GM23248 (cell line): ENCODE measurements at regions of chr4 and their contacts with region 1.

Region 1: GRCh38 chr4:15956179-15956850 is 6.7 kb downstream of the FGFBP2 start:
- DNase-seq: peak; percentile 70
- H3K4me3 ChIP-seq: no peak overlapping the region
- H3K27ac ChIP-seq: no peak overlapping the region
- H3K4me1 ChIP-seq: no peaks in the 10 kb centered on the region
- H3K27me3 ChIP-seq: peaks cover 7% of the 10 kb centered on the region; the same call in 1 of the 2 replicates

Region 2: DNA sequence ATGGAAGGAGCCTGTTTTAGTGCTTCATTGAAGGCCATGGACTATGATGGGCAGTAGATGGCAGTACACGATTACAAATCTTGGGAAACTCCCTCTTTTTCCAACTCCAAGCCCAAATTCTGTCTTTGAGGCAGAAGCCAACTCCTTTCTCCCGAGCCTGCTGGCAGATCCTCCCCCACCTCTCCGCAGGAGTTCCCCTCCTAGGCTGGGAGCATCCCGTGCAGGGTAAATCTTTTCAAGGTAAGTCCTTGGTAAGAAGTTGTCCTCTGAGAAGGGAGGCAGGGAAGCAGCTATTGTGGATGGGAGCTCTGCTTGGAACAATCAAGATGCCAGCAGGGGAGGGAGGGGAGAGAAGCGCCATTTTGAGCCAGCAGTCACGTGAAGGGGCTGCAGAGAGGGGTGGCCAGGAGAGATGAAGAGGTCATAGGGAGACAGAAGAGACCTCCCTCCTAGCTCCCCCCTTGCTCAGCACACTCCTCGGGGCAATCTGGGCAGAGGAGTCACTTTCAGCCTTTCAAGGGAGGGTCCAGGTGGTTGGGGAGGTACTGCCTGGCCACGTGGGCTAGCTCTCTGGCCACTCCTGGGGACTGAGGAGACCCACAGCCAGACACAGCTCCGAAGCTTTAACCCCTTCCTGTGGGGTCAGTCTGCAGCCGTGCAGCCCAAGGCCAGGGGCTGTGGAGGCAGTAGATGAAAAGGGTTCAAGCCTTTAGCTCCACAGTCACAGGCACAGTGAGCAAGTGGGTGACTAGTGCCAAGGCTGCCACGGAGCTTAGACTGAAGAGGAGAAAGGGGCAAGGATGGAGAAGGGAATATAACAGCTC is 477.0 kb before region 1 on chr4:
- in situ Hi-C with region 1: loop called (anchors 25 kb)
- DNase-seq: peak; percentile 92
- H3K4me3 ChIP-seq: peak overlapping the region; percentile 74
- H3K27ac ChIP-seq: peak overlapping the region; percentile 53
- H3K4me1 ChIP-seq: peaks cover 9% of the 10 kb centered on the region; the same call in 1 of the 2 replicates
- H3K27me3 ChIP-seq: no peaks in the 10 kb centered on the region

Region 3: DNA sequence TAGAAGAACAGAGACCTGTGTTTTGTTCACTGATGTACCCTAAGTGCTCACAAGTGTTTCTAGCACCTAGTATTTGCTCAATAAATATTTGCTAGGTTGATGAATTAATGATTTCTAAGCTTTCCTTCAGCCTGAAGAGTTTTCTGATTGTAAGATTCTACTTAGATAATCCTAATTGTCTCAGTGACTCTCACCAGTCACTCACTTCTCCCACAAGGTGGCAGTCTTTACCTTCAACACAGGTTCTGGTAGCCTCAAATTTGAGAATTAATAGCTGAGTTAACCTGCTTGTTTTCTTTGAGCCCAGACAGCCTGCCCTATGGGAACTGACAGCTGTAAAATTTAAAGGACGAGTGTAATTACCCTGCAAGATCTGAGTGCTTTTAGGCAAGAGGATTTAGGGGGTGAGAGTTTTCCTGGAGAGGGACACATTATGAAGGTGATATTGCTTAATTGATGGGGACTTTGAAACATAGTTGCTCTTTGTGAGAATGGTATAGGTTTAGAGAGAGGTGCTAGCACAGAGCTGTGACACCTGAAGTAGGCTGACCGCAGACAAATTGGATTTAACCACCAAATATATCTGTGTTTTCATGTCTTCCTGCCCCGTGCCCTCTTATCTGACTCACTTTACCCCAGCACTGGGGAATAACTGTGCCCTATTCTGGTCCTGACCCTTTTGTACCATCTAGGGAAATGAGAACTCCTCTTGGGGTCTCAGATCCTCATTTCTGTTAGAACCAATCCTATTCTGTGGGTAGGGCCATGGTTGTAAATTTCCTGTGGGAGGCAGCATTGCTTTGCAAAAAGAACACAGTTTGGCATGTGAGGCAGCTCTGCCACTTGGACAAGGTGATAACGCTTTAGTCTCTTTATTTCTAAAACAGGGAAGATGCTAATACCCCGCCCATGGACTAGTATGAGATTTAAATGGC is 150.5 kb before region 1 on chr4:
- in situ Hi-C with region 1: loop called (anchors 10 kb)
- DNase-seq: peak; percentile 75
- H3K4me3 ChIP-seq: no peak overlapping the region
- H3K27ac ChIP-seq: no peak overlapping the region
- H3K4me1 ChIP-seq: no peaks in the 10 kb centered on the region
- H3K27me3 ChIP-seq: peaks cover 49% of the 10 kb centered on the region

Region 4: GRCh38 chr4:15882675-15883086 is 73.6 kb before region 1 on chr4:
- in situ Hi-C with region 1: loop called (anchors 10 kb)
- DNase-seq: peak; percentile 78
- H3K4me3 ChIP-seq: no peak overlapping the region
- H3K27ac ChIP-seq: no peak overlapping the region
- H3K4me1 ChIP-seq: no peaks in the 10 kb centered on the region
- H3K27me3 ChIP-seq: peaks cover 17% of the 10 kb centered on the region; the same call in 1 of the 2 replicates